Left cardiac atrium (tissue), 4 donors: ENCODE measurements at regions of chr7 and their contacts with region 1.

Region 1: GRCh38 chr7:138738551-138739335 is 37.6 kb upstream of the SVOPL start:
- DNase-seq: peak; percentile 84
- ATAC-seq: peak; percentile 85 to 86

Region 2: GRCh38 chr7:137606061-137606674 is 1132.6 kb before region 1 on chr7:
- intact Hi-C with region 1: loop called in 1 of 2 experiments (anchors 5 kb)
- DNase-seq: no peak
- ATAC-seq: no peak

Region 3: DNA sequence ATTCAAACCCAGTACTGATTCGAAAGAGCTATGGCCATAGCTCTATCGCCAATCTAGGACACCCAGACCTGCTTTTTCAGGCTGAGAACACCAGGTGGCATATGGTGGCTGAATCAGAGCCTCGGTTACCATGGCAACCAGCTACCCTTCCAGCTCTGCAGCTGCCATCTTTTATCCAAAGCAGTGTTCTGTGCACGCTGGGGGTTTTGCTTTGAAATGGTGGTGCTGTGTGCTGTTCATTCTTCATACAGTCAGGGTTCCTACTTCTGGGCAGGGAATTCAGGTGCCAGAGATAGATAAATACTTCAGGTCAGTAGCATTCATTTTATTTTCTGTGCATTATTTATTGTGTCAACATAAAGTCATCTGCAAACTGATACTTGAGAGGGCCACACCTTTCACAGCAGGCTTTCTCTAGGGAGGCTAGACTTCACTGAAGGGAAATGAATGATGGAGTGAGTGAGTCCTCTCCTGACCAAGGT is 577.1 kb before region 1 on chr7:
- intact Hi-C with region 1: loop called (anchors 1 to 5 kb)
- DNase-seq: peak; percentile 82
- ATAC-seq: peak; percentile 89 to 93

Region 4: GRCh38 chr7:138478499-138478908 is 260.2 kb before region 1 on chr7:
- intact Hi-C with region 1: no loop called
- DNase-seq: no peak
- ATAC-seq: no peak

Region 5: DNA sequence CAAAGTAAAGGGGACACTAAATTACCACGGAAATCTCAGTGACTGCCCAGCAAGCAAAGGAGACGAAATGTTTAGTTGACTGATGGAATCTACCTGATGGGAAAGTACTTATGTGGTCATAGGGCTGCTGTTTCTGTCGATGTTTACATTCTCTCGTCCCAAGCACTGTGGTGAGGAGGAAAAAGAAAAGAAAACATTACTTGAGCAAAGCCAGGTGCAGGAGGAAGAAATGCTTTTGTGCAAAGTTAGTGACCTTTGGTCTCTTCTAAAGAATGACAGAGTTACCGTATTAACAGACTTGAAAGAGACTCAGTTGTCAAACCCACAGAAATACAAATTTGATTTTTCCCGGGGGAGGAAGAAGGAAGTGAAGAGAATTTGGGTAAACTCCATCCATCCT is 559.1 kb after region 1 on chr7:
- intact Hi-C with region 1: no loop called
- DNase-seq: no peak
- ATAC-seq: no peak